Activated CD8-positive, alpha-beta T cell treated with anti-CD3 and anti-CD28 coated beads for 36 hours (primary cell): ENCODE measurements at regions of chr9 and their contacts with region 1.

Region 1: GRCh38 chr9:129849901-129850300 is 14.6 kb downstream of the USP20 start:
- DNase-seq: no peak
- ATAC-seq: no peak
- H3K4me3 Mint-ChIP-seq: no peak overlapping the region
- H3K27ac Mint-ChIP-seq: peak overlapping the region; percentile 52
- H3K4me1 Mint-ChIP-seq: peaks cover 46% of the 10 kb centered on the region
- H3K27me3 Mint-ChIP-seq: no peaks in the 10 kb centered on the region
- CTCF ChIP-seq: no peak

Region 2: GRCh38 chr9:129863059-129863690 is 13.3 kb after region 1 on chr9:
- CTCF ChIA-PET with region 1: interaction called, 3 read pairs
- POLR2A ChIA-PET with region 1: interaction called, 10 read pairs
- intact Hi-C with region 1: no loop called
- DNase-seq: peak; percentile 92
- ATAC-seq: peak; percentile 78
- H3K4me3 Mint-ChIP-seq: peak overlapping the region; percentile 44
- H3K27ac Mint-ChIP-seq: peak overlapping the region; percentile 88
- H3K4me1 Mint-ChIP-seq: peaks cover 67% of the 10 kb centered on the region
- H3K27me3 Mint-ChIP-seq: no peaks in the 10 kb centered on the region
- CTCF ChIP-seq: no peak

Region 3: GRCh38 chr9:129919841-129920240 is 69.9 kb after region 1 on chr9:
- CTCF ChIA-PET with region 1: no interaction called
- POLR2A ChIA-PET with region 1: no interaction called
- intact Hi-C with region 1: no loop called
- DNase-seq: no peak
- ATAC-seq: no peak
- H3K4me3 Mint-ChIP-seq: no peak overlapping the region
- H3K27ac Mint-ChIP-seq: peak overlapping the region; percentile 71
- H3K4me1 Mint-ChIP-seq: peaks cover 44% of the 10 kb centered on the region
- H3K27me3 Mint-ChIP-seq: no peaks in the 10 kb centered on the region
- CTCF ChIP-seq: no peak